ENCODE measurements at regions of chr17 and their contacts with region 1.

Region 1: GRCh38 chr17:66873962-66874361 is 39.0 kb downstream of the CACNG5 start:
- DNase-seq: no peak
- H3K4me3 ChIP-seq: no peak overlapping the region
- CTCF ChIP-seq: no peak

Region 2: GRCh38 chr17:66643815-66644702 is 229.9 kb before region 1 on chr17:
- in situ Hi-C with region 1: no loop called
- DNase-seq: no peak
- H3K4me3 ChIP-seq: no peak overlapping the region
- CTCF ChIP-seq: no peak

Region 3: DNA sequence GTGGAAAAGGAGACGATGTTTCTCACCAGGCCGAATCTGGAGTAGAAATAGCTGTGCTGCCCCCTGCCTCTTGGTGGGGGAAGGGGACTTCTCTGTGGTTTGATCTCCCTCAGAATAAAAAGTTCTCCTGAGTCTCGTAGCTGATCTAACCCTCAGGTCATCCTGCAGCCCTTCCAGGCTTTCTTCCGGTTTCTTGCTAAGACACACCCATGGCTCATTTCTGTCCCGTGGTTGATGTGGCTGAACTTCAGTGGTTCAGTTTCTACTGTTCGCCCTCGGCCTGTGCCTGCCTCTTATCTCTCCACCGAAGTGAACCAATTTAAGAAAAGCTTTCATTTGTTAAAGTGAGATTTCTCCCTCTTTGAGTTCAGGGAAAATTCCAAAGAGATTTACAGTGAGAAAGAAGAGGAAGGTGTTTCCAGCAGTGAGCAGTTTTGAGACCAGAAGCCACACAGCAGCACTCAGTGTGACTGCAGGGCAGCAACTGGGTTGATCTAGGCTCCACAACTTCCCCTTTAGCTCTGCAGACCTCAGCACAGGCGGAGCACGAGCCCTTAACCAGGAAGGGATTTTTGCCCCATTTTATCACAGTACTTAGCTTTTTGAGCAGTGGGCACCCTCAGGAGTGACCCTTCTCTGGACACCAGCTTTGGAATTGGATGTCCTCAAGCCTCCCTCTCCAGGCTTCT is 74.0 kb before region 1 on chr17:
- in situ Hi-C with region 1: loop called (anchors 5 kb)
- DNase-seq: no peak
- H3K4me3 ChIP-seq: no peak overlapping the region
- CTCF ChIP-seq: no peak

Region 4: GRCh38 chr17:66841328-66841727 is 32.6 kb before region 1 on chr17:
- in situ Hi-C with region 1: no loop called
- DNase-seq: no peak
- H3K4me3 ChIP-seq: no peak overlapping the region
- CTCF ChIP-seq: no peak

Region 5: GRCh38 chr17:66920935-66921348 is 47.0 kb after region 1 on chr17:
- in situ Hi-C with region 1: loop called (anchors 5 kb)
- DNase-seq: no peak
- H3K4me3 ChIP-seq: no peak overlapping the region
- CTCF ChIP-seq: no peak

Region 6: GRCh38 chr17:67312265-67312664 is 438.3 kb after region 1 on chr17:
- in situ Hi-C with region 1: no loop called
- DNase-seq: no peak
- H3K4me3 ChIP-seq: no peak overlapping the region
- CTCF ChIP-seq: no peak